ENCODE measurements at regions of chr3 and their contacts with region 1.

Region 1: GRCh38 chr3:167480748-167481147 is 6.9 kb upstream of the SERPINI2 start:
- DNase-seq: no peak

Region 2: GRCh38 chr3:167892215-167892614 is 411.5 kb after region 1 on chr3:
- intact Hi-C with region 1: loop called in 1 of 2 experiments (anchors 5 kb)
- DNase-seq: no peak

Measured in posterior vena cava (tissue), 2 donors.